CD8-positive, alpha-beta T cell (primary cell): ENCODE measurements at regions of chr5 and their contacts with region 1.

Region 1: GRCh38 chr5:54517174-54518092 is at the start of gene SNX18:
- DNase-seq: peak; percentile 86 to 96 (median 91)
- ATAC-seq: peak; percentile 90
- H3K4me3 ChIP-seq: peak within 1 kb of the TSS; percentile 72 to 76
- H3K4me3 Mint-ChIP-seq: peak within 1 kb of the TSS; percentile 83
- H3K27ac ChIP-seq: peak within 1 kb of the TSS; percentile 48 to 75
- H3K27ac Mint-ChIP-seq: no peak within 1 kb of the TSS
- H3K4me1 ChIP-seq: peaks cover 33% of the 10 kb centered on the region
- H3K4me1 Mint-ChIP-seq: peaks cover 30% of the 10 kb centered on the region
- H3K27me3 ChIP-seq: peaks cover 0 to 2% of the 10 kb centered on the region in 2 experiments
- H3K27me3 Mint-ChIP-seq: no peaks in the 10 kb centered on the region
- CTCF ChIP-seq: peak; percentile 96
- total RNA-seq, gene SNX18: 12.7 to 12.9 TPM

Region 2: GRCh38 chr5:53109443-53110127 is 1407.8 kb before region 1 on chr5 and contains the start of gene MOCS2:
- CTCF ChIA-PET with region 1: no interaction called
- POLR2A ChIA-PET with region 1: no interaction called
- intact Hi-C with region 1: loop called in 1 of 2 experiments (anchors 2 kb)
- DNase-seq: peak; percentile 73 to 95 (median 90)
- ATAC-seq: peak; percentile 97
- H3K4me3 ChIP-seq: peak within 1 kb of the TSS; percentile 59 to 85
- H3K4me3 Mint-ChIP-seq: peak within 1 kb of the TSS; percentile 96
- H3K27ac ChIP-seq: peak within 1 kb of the TSS; percentile 62 to 75
- H3K27ac Mint-ChIP-seq: peak within 1 kb of the TSS; percentile 93
- H3K4me1 ChIP-seq: peaks cover 34% of the 10 kb centered on the region
- H3K4me1 Mint-ChIP-seq: peaks cover 55% of the 10 kb centered on the region
- H3K27me3 ChIP-seq: no peaks in the 10 kb centered on the region
- H3K27me3 Mint-ChIP-seq: no peaks in the 10 kb centered on the region
- CTCF ChIP-seq: no peak
- total RNA-seq, gene MOCS2: 16.5 to 18.2 TPM

Region 3: GRCh38 chr5:54533541-54534190 is 16.2 kb after region 1 on chr5:
- CTCF ChIA-PET with region 1: interaction called, 9 read pairs
- POLR2A ChIA-PET with region 1: interaction called, 4 read pairs
- intact Hi-C with region 1: loop called in 1 of 2 experiments (anchors 2 kb)
- DNase-seq: no peak
- ATAC-seq: no peak
- H3K4me3 ChIP-seq: no peak overlapping the region
- H3K4me3 Mint-ChIP-seq: no peak overlapping the region
- H3K27ac ChIP-seq: no peak overlapping the region
- H3K27ac Mint-ChIP-seq: peak overlapping the region; percentile 18
- H3K4me1 ChIP-seq: peaks cover 25% of the 10 kb centered on the region
- H3K4me1 Mint-ChIP-seq: peaks cover 57% of the 10 kb centered on the region
- H3K27me3 ChIP-seq: no peaks in the 10 kb centered on the region
- H3K27me3 Mint-ChIP-seq: no peaks in the 10 kb centered on the region
- CTCF ChIP-seq: no peak

Region 4: GRCh38 chr5:54743997-54744788 is 226.8 kb after region 1 on chr5:
- CTCF ChIA-PET with region 1: interaction called, 19 read pairs
- POLR2A ChIA-PET with region 1: interaction called, 8 read pairs
- intact Hi-C with region 1: loop called (anchors 1 to 5 kb)
- DNase-seq: peak in 8 of 9 experiments; percentile 29 to 82 (median 62)
- ATAC-seq: peak; percentile 97
- H3K4me3 ChIP-seq: no peak overlapping the region
- H3K4me3 Mint-ChIP-seq: peak overlapping the region; percentile 17
- H3K27ac ChIP-seq: peak overlapping the region in 1 of 2 experiments; percentile 66
- H3K27ac Mint-ChIP-seq: peak overlapping the region; percentile 38
- H3K4me1 ChIP-seq: peaks cover 14% of the 10 kb centered on the region
- H3K4me1 Mint-ChIP-seq: peaks cover 22% of the 10 kb centered on the region
- H3K27me3 ChIP-seq: no peaks in the 10 kb centered on the region
- H3K27me3 Mint-ChIP-seq: no peaks in the 10 kb centered on the region
- CTCF ChIP-seq: no peak

Region 5: GRCh38 chr5:54844905-54845566 is 327.6 kb after region 1 on chr5:
- CTCF ChIA-PET with region 1: interaction called, 203 read pairs
- POLR2A ChIA-PET with region 1: interaction called, 39 read pairs
- intact Hi-C with region 1: loop called (anchors 1 kb)
- DNase-seq: peak in 2 of 9 experiments; percentile 59 to 70
- ATAC-seq: no peak
- H3K4me3 ChIP-seq: no peak overlapping the region
- H3K4me3 Mint-ChIP-seq: peak overlapping the region; percentile 55
- H3K27ac ChIP-seq: no peak overlapping the region
- H3K27ac Mint-ChIP-seq: peak overlapping the region; percentile 15
- H3K4me1 ChIP-seq: peaks cover 3% of the 10 kb centered on the region
- H3K4me1 Mint-ChIP-seq: peaks cover 3% of the 10 kb centered on the region
- H3K27me3 ChIP-seq: no peaks in the 10 kb centered on the region
- H3K27me3 Mint-ChIP-seq: peaks cover 9% of the 10 kb centered on the region
- CTCF ChIP-seq: peak; percentile 78

Region 6: DNA sequence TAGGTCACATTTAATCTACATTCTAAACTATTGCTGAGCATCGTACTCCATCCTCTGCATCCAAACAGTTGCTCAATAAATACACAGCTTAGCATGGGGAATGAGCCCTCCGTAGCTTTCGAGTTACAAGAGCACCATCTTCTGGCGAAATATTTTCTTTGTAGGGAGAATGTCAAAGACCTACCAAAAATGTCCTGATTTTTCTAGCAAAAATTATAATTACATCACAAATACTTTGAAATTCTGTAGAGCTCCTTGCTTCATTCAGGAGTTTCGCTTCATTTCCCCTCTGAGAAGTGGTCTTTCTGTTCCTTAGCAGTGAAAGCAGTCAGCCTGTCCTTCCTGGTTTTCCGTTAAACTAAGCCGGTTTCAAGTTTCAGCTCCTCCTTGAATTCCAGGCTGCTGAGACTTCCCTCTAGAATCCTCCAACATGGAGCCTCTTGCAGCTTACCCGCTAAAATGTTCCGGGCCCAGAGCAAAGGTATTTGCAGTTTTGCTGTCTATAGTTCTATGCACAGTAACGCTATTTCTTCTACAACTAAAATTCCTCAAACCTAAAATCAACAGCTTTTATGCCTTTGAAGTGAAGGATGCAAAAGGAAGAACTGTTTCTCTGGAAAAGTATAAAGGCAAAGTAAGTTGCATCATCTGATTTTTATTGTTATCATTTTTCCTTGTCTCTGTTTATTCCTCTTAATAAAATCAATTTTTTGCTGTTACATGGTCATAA is 642.5 kb after region 1 on chr5 and contains the start of gene GPX8:
- CTCF ChIA-PET with region 1: interaction called, 4 read pairs
- POLR2A ChIA-PET with region 1: no interaction called
- intact Hi-C with region 1: loop called (anchors 2 to 5 kb)
- DNase-seq: peak in 3 of 9 experiments; percentile 32 to 73 (median 64)
- ATAC-seq: peak; percentile 79
- H3K4me3 ChIP-seq: no peak within 1 kb of the TSS
- H3K4me3 Mint-ChIP-seq: no peak within 1 kb of the TSS
- H3K27ac ChIP-seq: no peak within 1 kb of the TSS
- H3K27ac Mint-ChIP-seq: no peak within 1 kb of the TSS
- H3K4me1 ChIP-seq: no peaks in the 10 kb centered on the region
- H3K4me1 Mint-ChIP-seq: no peaks in the 10 kb centered on the region
- H3K27me3 ChIP-seq: no peaks in the 10 kb centered on the region
- H3K27me3 Mint-ChIP-seq: peaks cover 19% of the 10 kb centered on the region
- CTCF ChIP-seq: peak; percentile 73
- total RNA-seq, gene GPX8: not detected

Region 7: GRCh38 chr5:55534436-55535198 is 1017.2 kb after region 1 on chr5 and contains the start of gene PLPP1:
- CTCF ChIA-PET with region 1: no interaction called
- POLR2A ChIA-PET with region 1: no interaction called
- intact Hi-C with region 1: loop called in 1 of 2 experiments (anchors 5 kb)
- DNase-seq: peak; percentile 57 to 93 (median 79)
- ATAC-seq: peak; percentile 79
- H3K4me3 ChIP-seq: peak within 1 kb of the TSS; percentile 81 to 97
- H3K4me3 Mint-ChIP-seq: peak within 1 kb of the TSS; percentile 93
- H3K27ac ChIP-seq: peak within 1 kb of the TSS; percentile 81 to 87
- H3K27ac Mint-ChIP-seq: peak within 1 kb of the TSS; percentile 92
- H3K4me1 ChIP-seq: peaks cover 25% of the 10 kb centered on the region
- H3K4me1 Mint-ChIP-seq: peaks cover 37% of the 10 kb centered on the region
- H3K27me3 ChIP-seq: no peaks in the 10 kb centered on the region
- H3K27me3 Mint-ChIP-seq: no peaks in the 10 kb centered on the region
- CTCF ChIP-seq: no peak
- total RNA-seq, gene PLPP1: 5.8 to 5.9 TPM